ENCODE measurements at regions of chr16 and their contacts with region 1.

Region 1: GRCh38 chr16:3457434-3458252 is 14.2 kb downstream of the NAA60 start:
- DNase-seq: peak; percentile 93
- ATAC-seq: peak; percentile 86
- H3K4me3 Mint-ChIP-seq: peak overlapping the region; percentile 74
- H3K27ac Mint-ChIP-seq: peak overlapping the region; percentile 83
- H3K4me1 Mint-ChIP-seq: peaks cover 41% of the 10 kb centered on the region
- H3K27me3 Mint-ChIP-seq: no peaks in the 10 kb centered on the region

Region 2: DNA sequence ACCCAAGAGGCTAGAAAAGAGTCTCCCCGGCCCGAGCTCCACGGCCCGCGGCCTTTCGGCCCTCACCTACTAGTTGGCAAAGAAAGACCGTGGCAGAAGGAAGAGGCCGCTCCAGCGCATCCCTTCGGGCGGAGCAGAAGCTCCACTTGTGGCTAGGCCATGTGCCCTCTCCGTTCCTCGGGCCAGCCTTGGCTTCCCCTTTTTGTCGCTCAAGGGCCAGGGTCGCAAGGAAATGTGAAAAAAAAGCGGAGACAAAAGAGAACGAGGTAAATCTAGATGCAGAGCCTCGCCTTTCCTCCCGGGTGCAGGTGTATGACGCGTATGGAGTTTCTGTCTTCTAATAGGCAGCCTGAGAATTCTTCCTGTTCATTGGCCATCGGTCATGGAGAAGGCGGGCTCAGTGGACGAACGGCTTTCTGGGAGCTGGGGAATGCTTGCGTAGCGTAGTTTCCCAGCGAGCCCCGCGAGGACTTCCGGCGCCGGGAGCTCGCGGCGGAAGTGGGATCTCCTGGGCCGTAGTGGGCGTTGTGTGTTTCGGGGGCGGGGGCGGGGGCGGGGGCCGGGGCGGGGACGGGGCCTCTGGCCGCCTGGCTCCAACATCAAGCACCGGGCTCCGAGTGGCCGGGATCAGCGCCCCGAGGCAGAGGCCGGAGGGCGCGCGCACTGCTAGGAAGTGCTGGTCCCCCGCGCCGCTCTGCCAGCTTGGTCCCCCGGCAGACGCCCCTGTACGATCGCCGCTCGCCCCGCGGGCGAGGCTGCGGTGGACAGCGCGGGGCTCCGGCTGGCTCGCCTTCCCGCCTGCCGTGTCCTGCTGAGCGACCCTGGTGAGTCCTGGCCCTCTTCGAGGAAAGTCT is 322.9 kb before region 1 on chr16 and contains the start of gene ZNF213:
- CTCF ChIA-PET with region 1: no interaction called
- POLR2A ChIA-PET with region 1: no interaction called
- intact Hi-C with region 1: loop called in 1 of 2 experiments (anchors 1 kb)
- DNase-seq: peak; percentile 96
- ATAC-seq: peak; percentile 97
- H3K4me3 Mint-ChIP-seq: peak within 1 kb of the TSS; percentile 98
- H3K27ac Mint-ChIP-seq: peak within 1 kb of the TSS; percentile 95
- H3K4me1 Mint-ChIP-seq: peaks cover 30% of the 10 kb centered on the region
- H3K27me3 Mint-ChIP-seq: no peaks in the 10 kb centered on the region
- total RNA-seq, gene ZNF213: 7.6 to 8.3 TPM

Region 3: GRCh38 chr16:3234543-3235541 is 222.8 kb before region 1 on chr16 and contains the start of gene ZNF200:
- CTCF ChIA-PET with region 1: no interaction called
- POLR2A ChIA-PET with region 1: no interaction called
- intact Hi-C with region 1: loop called in 1 of 2 experiments (anchors 1 kb)
- DNase-seq: peak; percentile 98
- ATAC-seq: peak; percentile 94
- H3K4me3 Mint-ChIP-seq: peak within 1 kb of the TSS; percentile 89
- H3K27ac Mint-ChIP-seq: peak within 1 kb of the TSS; percentile 96
- H3K4me1 Mint-ChIP-seq: peaks cover 30% of the 10 kb centered on the region
- H3K27me3 Mint-ChIP-seq: no peaks in the 10 kb centered on the region
- total RNA-seq, gene ZNF200: 8.3 to 9.0 TPM

Region 4: GRCh38 chr16:3364774-3365427 is 92.7 kb before region 1 on chr16:
- CTCF ChIA-PET with region 1: interaction called, 3 read pairs
- POLR2A ChIA-PET with region 1: no interaction called
- intact Hi-C with region 1: loop called in 1 of 2 experiments (anchors 5 kb)
- DNase-seq: peak; percentile 94
- ATAC-seq: peak; percentile 98
- H3K4me3 Mint-ChIP-seq: peak overlapping the region; percentile 76
- H3K27ac Mint-ChIP-seq: peak overlapping the region; percentile 91
- H3K4me1 Mint-ChIP-seq: peaks cover 8% of the 10 kb centered on the region
- H3K27me3 Mint-ChIP-seq: peaks cover 6% of the 10 kb centered on the region

Region 5: DNA sequence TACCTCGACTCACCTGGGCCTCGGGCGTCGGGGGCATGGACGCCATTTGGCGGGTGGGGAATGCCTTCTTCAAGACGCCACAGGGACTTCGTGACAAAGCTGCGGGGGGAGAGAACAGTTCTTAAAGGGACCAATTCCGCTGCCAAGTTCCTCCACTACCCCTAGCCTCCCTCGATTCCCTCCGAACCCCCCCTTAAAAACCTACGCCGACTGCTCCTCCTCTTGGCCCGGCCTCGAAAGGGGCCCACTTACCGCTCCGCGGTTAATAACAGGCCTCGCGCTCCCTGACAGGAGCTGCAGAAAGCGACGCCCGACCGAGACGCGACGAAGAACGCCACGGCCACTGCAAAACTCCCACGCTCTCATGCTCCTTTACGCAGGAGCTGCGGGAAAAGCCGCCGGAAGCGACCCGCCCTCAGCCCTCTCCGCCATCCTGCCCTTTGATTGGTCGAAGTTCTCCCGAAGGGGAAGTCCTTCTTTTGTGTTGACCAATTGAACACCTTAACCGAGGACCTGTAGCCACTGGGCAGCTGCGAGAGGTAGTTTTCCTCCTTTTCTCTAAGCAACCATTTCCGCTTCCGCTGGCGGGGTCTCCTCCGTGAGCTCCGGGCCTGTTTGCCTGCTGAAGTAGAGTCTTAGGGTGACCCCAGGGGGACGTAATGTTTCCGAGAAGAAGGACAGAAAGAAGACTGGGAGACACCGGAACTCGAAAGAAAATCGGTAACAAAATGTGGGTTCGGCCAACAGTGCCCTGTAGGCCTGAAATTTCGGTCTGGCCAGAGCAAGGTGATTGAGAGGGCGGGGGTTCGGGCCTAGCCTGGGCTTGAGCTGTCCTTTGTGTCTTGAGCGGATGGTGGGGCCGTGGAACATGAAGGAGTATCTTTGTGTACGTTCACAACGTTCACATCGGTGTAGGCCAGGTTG is 14.3 kb before region 1 on chr16 and contains the starts of genes NAA60 and ZNF597:
- CTCF ChIA-PET with region 1: interaction called, 6 read pairs
- POLR2A ChIA-PET with region 1: interaction called, 4 read pairs
- intact Hi-C with region 1: loop called in 1 of 2 experiments (anchors 1 kb)
- DNase-seq: peak; percentile 88
- ATAC-seq: peak; percentile 91
- H3K4me3 Mint-ChIP-seq: peak within 1 kb of the TSS; percentile 97
- H3K27ac Mint-ChIP-seq: peak within 1 kb of the TSS; percentile 93
- H3K4me1 Mint-ChIP-seq: peaks cover 13% of the 10 kb centered on the region
- H3K27me3 Mint-ChIP-seq: no peaks in the 10 kb centered on the region
- total RNA-seq, gene NAA60: 25.9 to 38.9 TPM
- total RNA-seq, gene ZNF597: 1.9 to 2.4 TPM

Region 6: GRCh38 chr16:3530371-3530914 is 72.8 kb after region 1 on chr16:
- CTCF ChIA-PET with region 1: no interaction called
- POLR2A ChIA-PET with region 1: no interaction called
- intact Hi-C with region 1: no loop called
- DNase-seq: no peak
- ATAC-seq: peak; percentile 25
- H3K4me3 Mint-ChIP-seq: no peak overlapping the region
- H3K27ac Mint-ChIP-seq: no peak overlapping the region
- H3K4me1 Mint-ChIP-seq: no peaks in the 10 kb centered on the region
- H3K27me3 Mint-ChIP-seq: no peaks in the 10 kb centered on the region

Region 7: DNA sequence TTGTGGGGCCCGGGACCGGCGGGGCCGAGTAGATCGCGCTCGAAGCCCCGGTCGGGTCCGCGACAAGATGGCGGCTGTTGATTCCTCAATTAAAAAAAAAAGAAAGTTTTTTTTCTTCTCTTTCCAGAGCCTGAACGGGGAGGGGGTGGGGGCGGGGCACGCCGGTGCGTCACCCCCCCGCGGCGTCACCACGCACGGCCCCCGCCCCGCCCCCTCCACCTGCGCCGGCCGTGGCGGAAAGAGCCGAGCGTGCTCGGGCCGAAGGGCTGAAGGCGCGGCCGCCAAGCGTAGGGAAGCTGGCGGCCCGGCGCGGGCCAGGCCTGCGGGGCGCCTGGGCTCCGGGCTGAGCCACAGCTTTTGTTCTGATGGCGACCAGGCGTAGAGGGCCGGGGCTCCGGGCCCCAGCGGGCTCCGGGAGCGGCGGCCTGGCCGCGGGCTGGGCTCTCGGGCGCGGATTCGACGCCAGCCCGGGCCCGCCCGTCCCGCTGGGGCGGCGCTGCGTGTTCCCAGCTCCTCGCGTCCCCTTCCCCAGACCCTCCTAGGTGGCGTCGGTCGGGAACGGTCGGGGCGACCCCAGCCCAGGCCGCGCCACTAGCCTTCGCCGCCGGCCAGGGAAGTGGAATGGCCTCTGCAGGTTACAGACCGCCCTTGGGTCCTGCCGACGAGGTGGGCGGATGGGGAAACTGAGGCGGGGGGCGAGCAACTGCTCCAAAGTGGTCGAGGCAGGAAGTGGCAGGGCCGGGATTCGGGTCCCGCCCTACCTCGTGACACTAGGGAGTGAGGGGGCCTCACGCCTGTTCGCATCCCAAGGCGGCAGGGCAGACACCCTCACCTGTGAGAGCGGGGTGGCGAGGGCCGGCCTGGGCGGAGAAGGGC is 423.2 kb after region 1 on chr16 and contains the start of gene CREBBP:
- CTCF ChIA-PET with region 1: interaction called, 3 read pairs
- POLR2A ChIA-PET with region 1: no interaction called
- intact Hi-C with region 1: loop called in 1 of 2 experiments (anchors 1 kb)
- DNase-seq: peak; percentile 93
- ATAC-seq: peak; percentile 89
- H3K4me3 Mint-ChIP-seq: peak within 1 kb of the TSS; percentile 79
- H3K27ac Mint-ChIP-seq: peak within 1 kb of the TSS; percentile 69
- H3K4me1 Mint-ChIP-seq: peaks cover 36% of the 10 kb centered on the region
- H3K27me3 Mint-ChIP-seq: peaks cover 6% of the 10 kb centered on the region
- total RNA-seq, gene CREBBP: 28.1 to 37.4 TPM

Measured in activated CD4-positive, alpha-beta T cell treated with anti-CD3 and anti-CD28 coated beads for 36 hours (primary cell).